IMR-90 (cell line): ENCODE measurements at regions of chr13 and their contacts with region 1.

Region 1: DNA sequence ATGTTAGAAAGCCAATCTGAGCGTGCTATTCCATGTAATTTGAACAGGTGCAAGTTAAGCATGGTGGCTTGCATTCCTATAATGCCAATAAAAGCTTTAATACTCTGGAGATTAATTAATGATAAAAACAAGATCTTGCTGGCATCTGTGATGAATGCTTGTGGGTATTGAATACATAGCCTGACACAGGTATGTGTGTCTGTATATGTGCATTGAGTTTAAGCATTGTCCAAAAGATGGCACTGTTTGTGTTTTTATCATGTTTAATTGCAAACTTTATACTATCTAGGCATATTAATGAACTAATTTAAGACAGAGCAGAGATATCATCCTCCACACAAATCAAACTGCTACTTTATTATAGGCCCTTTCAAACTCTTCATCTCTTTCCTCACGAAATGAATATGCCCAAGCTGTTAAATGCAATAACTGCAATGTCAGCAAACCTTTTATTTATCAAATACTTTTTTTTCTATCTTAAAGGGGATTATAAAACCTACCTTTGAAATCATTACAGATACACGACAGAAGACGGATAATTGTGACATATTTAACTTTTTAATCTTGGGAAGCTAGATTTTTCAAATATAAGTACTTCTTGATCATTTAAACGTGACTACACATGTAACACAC is 86.5 kb downstream of the TNFSF11 start:
- DNase-seq: peak; percentile 27
- ATAC-seq: peak; percentile 65
- H3K4me3 ChIP-seq: no peak overlapping the region
- H3K27ac ChIP-seq: no peak overlapping the region
- H3K4me1 ChIP-seq: no peaks in the 10 kb centered on the region
- H3K27me3 ChIP-seq: peaks cover 31% of the 10 kb centered on the region
- CTCF ChIP-seq: peak; percentile 53
- POLR2A ChIP-seq: no peak
- RAD21 ChIP-seq: peak; percentile 60

Region 2: DNA sequence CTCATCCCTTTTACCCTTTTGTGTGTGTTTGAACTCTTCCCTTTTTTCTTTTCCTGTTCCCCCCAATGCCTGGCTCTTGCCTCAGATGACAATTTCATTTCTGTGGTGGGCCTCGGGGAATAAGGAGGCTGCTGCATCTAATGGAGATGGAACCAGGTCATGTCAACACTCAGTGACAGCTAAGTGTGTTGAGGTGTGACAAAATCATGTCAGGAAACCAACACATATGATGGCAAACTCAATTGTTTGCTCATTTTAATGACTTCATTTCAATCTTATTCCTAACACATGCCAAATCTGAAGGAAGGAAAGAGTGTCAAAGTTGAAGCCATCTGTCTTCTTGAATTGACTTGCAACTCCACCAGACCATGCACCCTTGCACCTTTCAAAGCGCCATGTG is 49.8 kb before region 1 on chr13:
- CTCF ChIA-PET with region 1: no interaction called
- POLR2A ChIA-PET with region 1: interaction called, 16 read pairs
- dilution Hi-C with region 1: no loop called
- in situ Hi-C with region 1: no loop called
- intact Hi-C with region 1: no loop called
- DNase-seq: no peak
- ATAC-seq: no peak
- H3K4me3 ChIP-seq: no peak overlapping the region
- H3K27ac ChIP-seq: no peak overlapping the region
- H3K4me1 ChIP-seq: no peaks in the 10 kb centered on the region
- H3K27me3 ChIP-seq: peaks cover 25% of the 10 kb centered on the region
- CTCF ChIP-seq: no peak
- POLR2A ChIP-seq: no peak
- RAD21 ChIP-seq: no peak

Region 3: GRCh38 chr13:42836930-42837690 is 176.7 kb after region 1 on chr13:
- CTCF ChIA-PET with region 1: no interaction called
- POLR2A ChIA-PET with region 1: no interaction called
- dilution Hi-C with region 1: no loop called
- in situ Hi-C with region 1: no loop called
- intact Hi-C with region 1: loop called (anchors 10 kb)
- DNase-seq: peak; percentile 51
- ATAC-seq: peak; percentile 70
- H3K4me3 ChIP-seq: no peak overlapping the region
- H3K27ac ChIP-seq: no peak overlapping the region
- H3K4me1 ChIP-seq: peaks cover 2% of the 10 kb centered on the region; the same call in 1 of the 2 replicates
- H3K27me3 ChIP-seq: peaks cover 2% of the 10 kb centered on the region
- CTCF ChIP-seq: peak; percentile 49
- POLR2A ChIP-seq: no peak
- RAD21 ChIP-seq: peak; percentile 59